ENCODE measurements at regions of chr13 and their contacts with region 1.

Region 1: DNA sequence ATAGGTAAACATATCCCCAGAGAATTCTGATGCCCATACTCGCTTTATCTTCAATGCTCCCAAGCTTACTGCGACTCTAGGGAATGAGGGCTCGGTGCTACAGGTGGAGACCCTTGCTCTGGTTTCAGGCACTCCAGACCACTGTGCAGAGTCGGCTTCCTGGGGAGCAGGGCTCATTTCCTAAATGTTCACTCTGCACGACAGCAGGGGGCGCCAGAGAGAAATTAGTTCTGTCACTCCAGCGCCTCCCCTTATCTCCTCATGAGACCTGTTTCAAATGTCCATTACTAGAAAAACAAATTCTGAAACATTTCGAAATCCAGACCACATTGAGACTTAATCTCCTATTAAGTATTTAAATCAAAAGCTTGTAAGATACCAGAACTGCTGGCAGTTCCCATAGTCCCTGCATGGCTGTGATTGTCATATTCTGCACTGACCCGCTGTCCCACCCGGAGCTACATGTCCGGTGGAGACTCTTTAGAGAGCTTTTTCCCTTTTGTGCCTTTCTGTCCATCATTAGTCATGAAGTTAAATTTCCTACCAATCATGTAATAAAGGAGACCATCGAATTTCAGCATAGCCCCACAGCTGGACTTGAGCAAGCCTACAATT is 22.4 kb downstream of the EPSTI1 start:
- DNase-seq: peak in 1 of 2 donors; percentile 85
- H3K4me3 ChIP-seq: no peak overlapping the region
- H3K27ac ChIP-seq: no peak overlapping the region
- H3K4me1 ChIP-seq: no peaks in the 10 kb centered on the region
- H3K27me3 ChIP-seq: no peaks in the 10 kb centered on the region
- CTCF ChIP-seq: peak; percentile 49 to 73 (median 62)

Region 2: DNA sequence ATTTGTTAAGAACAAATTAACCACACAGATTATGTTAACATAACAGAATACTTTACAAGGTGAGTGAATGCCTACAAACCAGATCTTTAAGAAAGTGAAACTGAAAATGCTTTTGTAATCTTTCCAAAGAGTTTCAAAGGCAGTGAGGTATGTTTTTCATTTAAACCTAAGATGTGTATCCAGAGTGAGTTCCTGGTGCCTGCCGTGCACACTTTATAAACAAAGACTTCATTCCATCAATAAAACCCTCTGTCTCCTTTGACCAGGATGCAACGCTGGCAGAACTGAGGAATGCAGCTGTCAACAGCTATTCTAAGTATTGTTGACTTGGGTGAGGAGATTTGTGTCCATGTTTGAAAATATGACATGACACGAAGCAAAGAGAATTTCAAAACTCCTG is 398.3 kb after region 1 on chr13:
- intact Hi-C with region 1: loop called (anchors 5 kb)
- DNase-seq: no peak
- H3K4me3 ChIP-seq: peak overlapping the region; percentile 12 to 18
- H3K27ac ChIP-seq: no peak overlapping the region
- H3K4me1 ChIP-seq: peaks cover 0 to 8% of the 10 kb centered on the region in 2 donors
- H3K27me3 ChIP-seq: no peaks in the 10 kb centered on the region
- CTCF ChIP-seq: no peak

Region 3: DNA sequence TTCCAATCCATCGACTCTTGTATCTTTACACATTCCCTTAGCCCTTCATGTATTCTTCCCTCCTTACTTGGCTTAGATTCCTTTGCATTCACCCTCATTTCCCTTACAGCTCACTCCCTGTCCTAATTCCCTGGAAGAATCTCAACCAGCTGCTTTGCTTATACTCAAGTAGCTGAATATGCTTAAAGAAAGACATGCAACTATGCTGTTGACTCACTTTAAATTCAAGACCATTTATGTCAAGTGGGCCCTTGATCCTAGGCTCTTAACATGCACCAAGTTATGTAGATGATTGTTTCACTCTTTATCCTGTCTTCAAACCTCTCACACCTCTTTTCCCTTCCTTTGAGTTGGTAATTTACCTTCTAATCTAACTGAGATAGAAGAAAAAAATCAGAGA is 902.5 kb after region 1 on chr13:
- intact Hi-C with region 1: loop called (anchors 2 kb)
- DNase-seq: no peak
- H3K4me3 ChIP-seq: no peak overlapping the region
- H3K27ac ChIP-seq: no peak overlapping the region
- H3K4me1 ChIP-seq: no peaks in the 10 kb centered on the region
- H3K27me3 ChIP-seq: no peaks in the 10 kb centered on the region
- CTCF ChIP-seq: no peak

Measured in ascending aorta (tissue), 2 donors.